Adrenal gland (tissue), 19 donors: ENCODE measurements at regions of chr2 and their contacts with region 1.

Region 1: DNA sequence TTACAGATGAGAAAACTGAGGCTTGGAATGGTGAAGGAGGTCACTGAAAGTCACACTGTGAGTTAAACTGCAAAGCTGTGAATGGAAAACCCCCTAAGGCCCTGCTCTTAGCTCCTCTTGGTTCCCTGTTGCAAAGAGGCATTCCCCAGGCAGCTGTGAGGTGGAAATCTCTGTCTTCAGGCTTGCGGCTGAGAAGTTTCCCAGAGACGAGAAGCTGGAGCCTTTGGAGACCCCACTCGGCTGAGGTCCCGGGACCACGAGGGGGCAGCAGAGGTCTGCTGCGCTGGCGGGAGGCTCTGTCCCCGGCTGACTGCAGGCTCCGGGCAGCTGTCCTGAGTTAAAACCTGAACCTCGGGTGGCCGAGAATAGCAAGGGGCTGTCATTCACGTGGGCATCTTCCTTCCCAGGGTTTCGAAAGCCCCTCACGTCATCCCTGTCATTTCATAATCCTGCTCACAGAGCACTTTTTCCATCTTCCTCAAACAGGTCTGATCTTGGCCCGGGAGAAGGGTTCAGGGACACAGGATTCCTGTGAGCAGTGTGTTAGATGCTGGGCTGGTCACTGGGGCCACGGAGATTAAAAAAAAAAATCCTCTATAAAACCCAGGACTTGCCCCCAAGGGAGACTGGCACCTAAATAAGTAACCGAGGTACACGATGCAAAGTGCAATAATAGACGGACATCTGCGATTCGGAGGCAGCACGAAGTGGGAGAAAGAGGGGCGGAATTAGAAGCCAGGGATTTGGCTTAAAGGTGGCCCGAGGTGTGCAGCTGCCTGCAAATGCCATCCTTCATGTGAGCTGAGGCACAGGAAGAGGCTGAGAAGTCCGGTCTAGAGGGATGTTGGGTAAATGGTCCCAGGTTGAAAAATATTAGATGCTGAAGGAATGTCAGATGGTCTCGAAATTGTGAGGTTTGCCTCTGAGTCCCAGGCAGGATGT is 24.6 kb upstream of the ATOH8 start:
- DNase-seq: peak; percentile 85 to 94 (median 90)
- H3K4me3 ChIP-seq: no peak overlapping the region
- H3K27ac ChIP-seq: peak overlapping the region in 1 of 5 donors; percentile 45
- H3K4me1 ChIP-seq: peaks cover 0 to 18% of the 10 kb centered on the region in 2 donors
- H3K27me3 ChIP-seq: no peaks in the 10 kb centered on the region
- CTCF ChIP-seq: peak; percentile 86 to 97 (median 92)
- POLR2A ChIP-seq: no peak

Region 2: DNA sequence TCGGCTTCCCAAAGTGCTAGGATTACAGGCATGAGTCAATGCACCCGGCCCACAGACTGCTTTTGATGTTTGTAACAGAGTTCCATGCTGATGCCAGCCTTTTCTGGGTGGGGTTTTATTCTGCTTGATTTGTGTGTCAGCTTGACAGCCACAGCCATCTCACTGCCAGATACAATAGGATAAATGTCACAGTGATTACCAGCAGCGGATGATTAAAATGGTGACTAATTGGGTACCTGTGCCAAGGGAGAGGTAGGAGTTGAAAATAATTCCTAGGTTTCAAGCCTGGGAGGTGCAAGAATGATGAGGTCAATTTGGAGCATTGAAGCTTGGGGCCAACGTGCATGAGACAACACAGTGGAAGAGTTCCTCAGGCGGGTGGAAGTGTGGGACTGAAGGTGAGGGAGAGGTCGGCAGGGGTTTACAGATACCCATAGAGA is 271.3 kb before region 1 on chr2:
- intact Hi-C with region 1: no loop called
- DNase-seq: peak in 5 of 7 donors; percentile 69 to 82 (median 73)
- H3K4me3 ChIP-seq: no peak overlapping the region
- H3K27ac ChIP-seq: peak overlapping the region in 2 of 5 donors; percentile 5 to 74
- H3K4me1 ChIP-seq: peaks cover 5 to 14% of the 10 kb centered on the region in 2 donors
- H3K27me3 ChIP-seq: no peaks in the 10 kb centered on the region
- CTCF ChIP-seq: no peak
- POLR2A ChIP-seq: no peak

Region 3: DNA sequence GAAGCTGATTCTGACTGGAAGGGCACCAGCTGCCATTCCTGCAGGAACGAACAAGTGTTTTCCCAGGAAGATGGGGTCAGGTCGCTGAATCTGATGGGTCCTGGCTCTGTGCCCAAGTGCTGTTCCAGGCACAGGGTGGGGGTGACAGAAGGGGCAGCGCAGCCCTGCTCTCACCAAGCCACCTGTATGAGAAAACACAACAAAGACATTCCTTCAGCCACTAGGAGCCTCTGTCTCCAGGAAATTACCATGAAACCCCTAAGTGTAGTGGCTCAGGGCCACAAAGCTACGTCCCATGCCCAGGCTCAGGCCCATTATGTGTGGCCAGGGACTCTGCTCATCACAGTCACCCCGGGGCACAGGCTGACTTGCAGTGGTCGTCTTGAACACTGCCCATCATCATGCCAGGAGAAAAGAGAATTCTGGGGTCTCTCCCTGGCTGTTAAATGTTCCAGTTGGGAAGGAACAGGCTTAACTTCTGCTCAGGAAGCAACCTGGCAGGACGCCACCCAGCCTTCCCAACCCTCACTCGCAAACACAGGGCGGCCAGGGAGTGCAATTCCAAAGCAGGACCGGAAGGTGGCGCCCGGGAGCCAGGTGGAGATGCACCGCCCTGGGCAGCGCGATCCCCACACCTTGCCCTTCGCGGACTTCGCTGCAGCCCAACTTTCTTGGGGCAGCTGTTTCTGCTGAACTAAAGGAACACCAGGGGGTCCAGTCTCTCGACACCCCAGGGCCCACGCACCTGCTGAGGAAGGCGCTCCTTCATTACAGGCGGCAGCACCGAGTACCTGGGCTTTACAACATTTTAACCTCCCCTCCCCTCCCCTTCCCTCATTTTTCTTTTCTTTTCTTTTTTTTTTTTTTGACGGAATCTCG is 50.1 kb before region 1 on chr2:
- intact Hi-C with region 1: no loop called
- DNase-seq: peak; percentile 86 to 96 (median 93)
- H3K4me3 ChIP-seq: no peak overlapping the region
- H3K27ac ChIP-seq: peak overlapping the region in 1 of 5 donors; percentile 15
- H3K4me1 ChIP-seq: peaks cover 0 to 11% of the 10 kb centered on the region in 2 donors
- H3K27me3 ChIP-seq: no peaks in the 10 kb centered on the region
- CTCF ChIP-seq: peak; percentile 93 to 99 (median 97)
- POLR2A ChIP-seq: no peak

Region 4: DNA sequence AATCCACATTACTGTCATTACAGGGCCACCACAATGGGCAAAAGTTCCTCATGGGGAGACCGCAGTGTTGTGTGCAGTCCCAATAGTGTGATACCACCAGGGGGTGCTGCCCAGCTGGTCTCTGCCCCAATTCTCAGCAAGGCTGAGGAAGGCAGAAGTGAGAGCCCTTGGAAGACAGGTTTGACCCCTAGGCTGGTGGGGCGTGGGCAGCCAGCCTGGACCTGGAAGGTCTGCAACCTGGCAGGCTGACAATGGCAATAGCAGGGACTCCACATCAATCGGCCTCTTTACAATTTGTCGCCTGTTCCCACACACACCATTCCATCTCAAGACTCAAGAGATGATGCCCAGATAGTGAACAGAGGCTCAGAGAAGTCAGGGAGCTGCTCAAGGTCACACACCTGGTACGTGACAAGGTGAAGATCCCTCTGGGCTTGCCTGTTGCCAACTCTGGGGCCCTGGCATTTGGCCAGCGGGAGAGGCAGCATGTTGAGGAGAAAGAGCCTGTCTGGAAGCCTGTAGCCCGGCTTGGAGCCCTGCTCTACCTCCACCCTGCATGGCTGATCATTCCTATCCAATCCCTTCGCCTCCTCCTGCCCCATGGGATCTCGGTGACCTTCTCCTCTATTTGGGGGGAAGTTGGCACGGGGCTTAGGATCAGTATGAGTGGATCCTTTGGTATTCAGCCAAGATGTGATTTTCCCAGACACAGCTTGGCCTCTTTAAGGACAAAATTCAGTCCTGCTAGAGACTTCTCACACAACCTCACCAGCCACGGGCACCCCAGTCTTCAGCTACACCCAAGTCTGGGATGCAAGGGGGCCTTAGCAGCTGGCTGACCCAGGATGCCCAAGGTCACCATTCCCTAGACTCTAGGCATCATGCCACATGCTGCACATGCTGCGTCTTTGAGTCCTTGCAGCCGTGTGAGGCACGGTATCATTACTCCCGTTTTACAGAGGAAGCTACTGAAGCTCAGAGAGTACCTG is 21.7 kb after region 1 on chr2:
- intact Hi-C with region 1: loop called in 1 of 2 experiments (anchors 2 kb)
- DNase-seq: peak; percentile 68 to 88 (median 80)
- H3K4me3 ChIP-seq: no peak overlapping the region
- H3K27ac ChIP-seq: no peak overlapping the region
- H3K4me1 ChIP-seq: peaks cover 22 to 40% of the 10 kb centered on the region in 2 donors
- H3K27me3 ChIP-seq: peaks cover 19% of the 10 kb centered on the region
- CTCF ChIP-seq: peak; percentile 78 to 90 (median 86)
- POLR2A ChIP-seq: no peak

Region 5: GRCh38 chr2:85888684-85889626 is 159.8 kb after region 1 on chr2 and contains the start of gene ST3GAL5:
- intact Hi-C with region 1: no loop called
- DNase-seq: peak; percentile 91 to 96 (median 93)
- H3K4me3 ChIP-seq: peak within 1 kb of the TSS; percentile 31 to 98 (median 64)
- H3K27ac ChIP-seq: peak within 1 kb of the TSS; percentile 84 to 99 (median 95)
- H3K4me1 ChIP-seq: peaks cover 54 to 75% of the 10 kb centered on the region in 2 donors
- H3K27me3 ChIP-seq: no peaks in the 10 kb centered on the region
- CTCF ChIP-seq: peak; percentile 9 to 69 (median 58)
- POLR2A ChIP-seq: peak; percentile 45 to 91
- total RNA-seq, gene ST3GAL5: 25.6 to 172 (median 89.2) TPM